Heart left ventricle (tissue), 16 donors: ENCODE measurements at regions of chr1 and their contacts with region 1.

Region 1: DNA sequence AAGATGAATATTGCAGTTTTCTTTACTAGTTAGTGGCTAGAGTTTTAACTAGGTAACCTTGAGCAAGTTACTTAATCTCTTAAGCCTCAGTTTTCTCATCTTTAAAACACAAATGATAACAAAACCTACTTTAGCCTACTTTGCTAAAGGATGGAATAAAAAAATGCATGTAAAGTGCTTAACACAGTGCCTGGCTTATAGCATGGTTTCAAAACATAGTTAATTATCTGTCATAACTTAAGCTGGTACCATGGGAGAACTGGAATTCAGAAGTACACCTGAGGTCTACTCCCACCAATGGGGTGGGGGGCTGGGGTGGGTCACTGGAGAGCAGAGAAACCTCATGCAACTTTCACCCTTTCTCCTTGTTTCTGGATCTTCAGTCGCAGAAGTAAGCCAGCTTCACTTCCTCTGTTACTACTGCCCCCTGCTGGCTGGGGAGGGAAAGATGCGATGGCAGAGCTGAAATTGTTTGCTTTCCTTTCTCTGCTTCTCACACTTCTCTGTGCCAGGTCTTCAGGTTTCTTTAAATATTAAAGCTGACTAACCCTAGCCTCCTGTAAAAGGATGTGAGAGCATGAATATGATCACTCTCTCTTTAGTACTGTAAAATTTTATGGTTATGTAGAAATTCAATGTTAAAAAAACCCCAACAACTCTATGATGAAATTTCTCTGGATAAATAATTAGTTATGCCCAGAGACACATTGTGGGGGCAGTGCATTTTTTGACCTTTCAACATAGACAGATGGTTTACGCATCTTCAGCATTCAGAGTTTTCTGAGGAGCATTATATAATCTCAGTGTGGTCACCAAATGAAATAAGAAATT is 324.2 kb downstream of the HLX start:
- DNase-seq: peak; percentile 76 to 86 (median 80)
- ATAC-seq: peak; percentile 44 to 76 (median 71)
- H3K4me3 ChIP-seq: peak overlapping the region in 1 of 12 donors; percentile 1
- H3K27ac ChIP-seq: peak overlapping the region; percentile 2 to 68 (median 39)
- H3K4me1 ChIP-seq: peaks cover 0 to 27% (median 18%) of the 10 kb centered on the region in 12 donors
- H3K27me3 ChIP-seq: no peaks in the 10 kb centered on the region
- CTCF ChIP-seq: peak; percentile 80 to 96 (median 91)
- POLR2A ChIP-seq: no peak

Region 2: GRCh38 chr1:220873868-220874655 is 329.4 kb before region 1 on chr1:
- intact Hi-C with region 1: loop called in 6 of 10 experiments (anchors 1 to 10 kb)
- DNase-seq: peak in 3 of 5 donors; percentile 63 to 72 (median 66)
- ATAC-seq: peak in 3 of 4 donors; percentile 27 to 43 (median 37)
- H3K4me3 ChIP-seq: no peak overlapping the region
- H3K27ac ChIP-seq: peak overlapping the region in 4 of 12 donors; percentile 13 to 97 (median 42)
- H3K4me1 ChIP-seq: peaks cover 0 to 47% (median 29%) of the 10 kb centered on the region in 12 donors
- H3K27me3 ChIP-seq: peaks cover 0 to 7% (median 0%) of the 10 kb centered on the region in 9 donors
- CTCF ChIP-seq: peak; percentile 53 to 87 (median 76)
- POLR2A ChIP-seq: no peak

Region 3: DNA sequence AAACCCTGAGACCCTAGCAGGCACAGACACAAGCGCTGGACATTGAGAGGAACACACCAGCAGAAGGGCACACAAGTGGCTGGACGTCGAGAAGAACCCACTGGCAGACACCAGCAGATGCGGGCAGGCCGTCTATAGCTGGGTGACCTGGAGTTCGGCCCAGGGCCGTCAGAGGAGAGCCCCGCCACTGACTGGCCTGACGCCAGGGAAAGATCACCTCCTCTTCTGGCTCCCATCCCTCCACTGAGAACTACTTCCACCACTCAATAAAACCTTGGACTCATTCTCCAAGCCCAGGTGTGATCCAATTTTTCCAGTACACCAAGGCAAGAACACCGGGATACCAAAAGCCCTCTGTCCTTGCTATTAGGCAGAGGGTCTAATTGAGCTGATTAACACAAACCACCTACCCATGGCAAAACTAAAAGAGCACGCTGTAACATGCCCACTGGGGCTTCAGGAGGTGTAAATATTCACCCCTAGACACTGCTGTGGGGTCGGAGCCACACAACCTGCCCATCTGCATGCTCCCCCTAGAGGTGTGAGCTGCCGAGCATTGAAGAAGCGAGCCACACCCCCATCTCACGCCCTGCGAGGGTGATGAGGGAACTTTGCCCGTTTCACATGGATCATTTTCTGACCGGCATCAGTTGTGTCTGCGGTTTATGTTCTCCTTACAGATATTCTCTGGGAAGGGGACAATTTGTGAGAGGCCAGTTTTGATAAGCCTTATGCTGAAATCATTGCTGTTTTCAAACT is 219.4 kb before region 1 on chr1:
- intact Hi-C with region 1: no loop called
- DNase-seq: no peak
- ATAC-seq: no peak
- H3K4me3 ChIP-seq: no peak overlapping the region
- H3K27ac ChIP-seq: no peak overlapping the region
- H3K4me1 ChIP-seq: peaks cover 0 to 12% (median 0%) of the 10 kb centered on the region in 12 donors
- H3K27me3 ChIP-seq: no peaks in the 10 kb centered on the region
- CTCF ChIP-seq: no peak
- POLR2A ChIP-seq: no peak